SK-N-SH (cell line): ENCODE measurements at regions of chr1 and their contacts with region 1.

Region 1: DNA sequence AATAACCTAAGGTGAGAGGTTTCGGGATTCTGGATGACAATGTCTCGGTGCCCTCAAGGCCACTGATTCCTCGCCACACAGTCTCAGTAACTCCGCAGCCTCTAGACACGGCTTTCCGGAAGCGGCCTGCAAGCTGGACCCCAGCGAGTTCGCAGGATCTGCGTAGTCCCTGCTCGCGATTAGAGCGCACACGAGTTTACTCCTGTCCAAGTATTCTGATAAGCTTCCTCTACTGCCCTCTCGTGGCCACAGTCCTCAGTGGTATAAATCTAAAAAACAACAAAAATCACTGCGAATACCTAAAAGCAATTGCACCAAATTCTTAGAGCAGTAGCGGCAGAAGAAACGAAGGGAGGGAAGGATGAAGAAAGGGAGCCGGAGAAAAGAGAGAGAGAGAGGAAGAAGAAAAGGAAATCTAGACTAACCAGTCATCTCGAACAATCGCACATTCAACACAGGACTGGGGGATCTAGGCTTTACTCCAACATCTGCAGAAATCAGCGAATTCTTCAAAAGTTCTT is 1.1 kb upstream of the PLXNA2 start:
- DNase-seq: peak; percentile 85
- H3K4me3 ChIP-seq: peak overlapping the region; percentile 93 to 96
- H3K27ac ChIP-seq: peak overlapping the region; percentile 57 to 86
- H3K4me1 ChIP-seq: peaks cover under 1 to 42% of the 10 kb centered on the region in 2 experiments; a peak in 3 of 4 replicates
- H3K27me3 ChIP-seq: no peaks in the 10 kb centered on the region
- CTCF ChIP-seq: peak; percentile 83
- EP300 ChIP-seq: peak in 1 of 2 experiments; percentile 46; a peak in 2 of 4 replicates
- RAD21 ChIP-seq: peak; percentile 88

Region 2: GRCh38 chr1:207823880-207824566 is 421.2 kb before region 1 on chr1:
- CTCF ChIA-PET with region 1: no interaction called
- POLR2A ChIA-PET with region 1: no interaction called
- DNase-seq: peak; percentile 67
- H3K4me3 ChIP-seq: no peak overlapping the region
- H3K27ac ChIP-seq: no peak overlapping the region
- H3K4me1 ChIP-seq: peaks cover 0 to 5% of the 10 kb centered on the region in 2 experiments; a peak in 2 of 4 replicates
- H3K27me3 ChIP-seq: no peaks in the 10 kb centered on the region
- CTCF ChIP-seq: peak; percentile 57
- EP300 ChIP-seq: no peak
- RAD21 ChIP-seq: no peak

Region 3: GRCh38 chr1:208029381-208030287 is 215.6 kb before region 1 on chr1:
- CTCF ChIA-PET with region 1: interaction called, 579 read pairs
- POLR2A ChIA-PET with region 1: no interaction called
- DNase-seq: no peak
- H3K4me3 ChIP-seq: no peak overlapping the region
- H3K27ac ChIP-seq: peak overlapping the region in 1 of 2 experiments; percentile 90; a peak in 2 of 4 replicates
- H3K4me1 ChIP-seq: peaks cover 6 to 19% of the 10 kb centered on the region in 2 experiments; a peak in 3 of 4 replicates
- H3K27me3 ChIP-seq: no peaks in the 10 kb centered on the region
- CTCF ChIP-seq: no peak
- EP300 ChIP-seq: no peak; a peak in 1 of 4 replicates
- RAD21 ChIP-seq: no peak

Region 4: DNA sequence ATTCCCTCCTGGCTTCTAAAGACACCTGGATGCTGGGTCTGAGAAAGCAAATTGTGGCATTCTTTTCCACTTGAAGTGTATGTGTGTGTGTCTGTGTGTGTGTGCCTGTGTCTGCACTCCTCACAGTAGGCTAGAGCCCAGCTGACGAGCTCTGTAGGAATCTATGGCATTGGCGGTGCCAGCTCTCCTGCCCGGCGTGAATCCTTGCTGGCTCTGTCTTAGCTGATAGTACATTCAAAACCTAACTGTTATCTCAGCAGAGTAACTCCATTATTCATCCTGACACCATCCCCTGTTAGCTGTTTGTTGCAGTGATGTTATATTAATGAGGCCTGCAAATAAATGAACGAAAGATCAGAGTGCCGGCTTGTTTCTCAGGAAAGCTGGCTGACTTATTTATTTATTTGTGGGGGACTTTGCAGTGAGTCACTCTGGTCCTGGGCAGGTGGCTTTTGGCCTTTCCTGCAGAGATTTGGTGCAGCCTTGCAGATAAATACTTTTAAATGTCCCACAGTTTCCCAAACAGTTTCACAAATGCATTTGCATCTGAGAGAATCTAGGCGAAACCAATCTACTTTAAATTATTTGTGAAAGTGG is 173.7 kb before region 1 on chr1:
- CTCF ChIA-PET with region 1: interaction called, 15 read pairs
- POLR2A ChIA-PET with region 1: no interaction called
- DNase-seq: no peak
- H3K4me3 ChIP-seq: no peak overlapping the region
- H3K27ac ChIP-seq: no peak overlapping the region
- H3K4me1 ChIP-seq: peaks cover 0 to 15% of the 10 kb centered on the region in 2 experiments; a peak in 2 of 4 replicates
- H3K27me3 ChIP-seq: no peaks in the 10 kb centered on the region
- CTCF ChIP-seq: no peak
- EP300 ChIP-seq: no peak
- RAD21 ChIP-seq: no peak

Region 5: DNA sequence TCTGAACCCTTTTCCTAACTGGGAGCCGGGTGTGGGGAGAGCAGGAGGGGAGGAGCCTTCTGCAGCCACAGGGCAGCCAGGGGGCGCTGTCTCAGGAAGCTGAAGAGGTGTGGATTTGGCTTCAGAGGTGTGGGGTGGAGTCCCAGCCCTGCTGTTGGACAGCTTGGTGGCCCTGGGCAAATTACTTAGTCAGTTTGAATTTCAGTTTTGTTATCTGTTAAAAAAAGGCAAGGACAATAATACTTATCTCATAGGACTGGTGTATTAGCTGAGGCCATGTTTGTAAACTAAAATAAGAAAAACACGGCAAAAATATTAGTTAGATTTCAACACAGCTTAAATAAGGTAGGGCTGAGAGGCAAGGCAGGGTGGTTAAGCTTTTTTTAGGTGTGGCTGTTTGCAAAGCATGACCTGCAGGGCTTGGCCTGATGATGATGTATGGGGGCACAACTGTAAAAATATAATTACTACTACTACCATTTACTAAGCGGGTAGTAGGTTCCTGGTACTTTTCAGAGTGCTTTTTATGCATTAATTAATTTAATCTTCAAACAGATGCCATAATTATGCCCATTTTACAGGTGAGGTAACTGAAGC is 112.9 kb before region 1 on chr1:
- CTCF ChIA-PET with region 1: interaction called, 95 read pairs
- POLR2A ChIA-PET with region 1: no interaction called
- DNase-seq: peak; percentile 72
- H3K4me3 ChIP-seq: no peak overlapping the region; a peak in 1 of 4 replicates
- H3K27ac ChIP-seq: no peak overlapping the region
- H3K4me1 ChIP-seq: peaks cover 9 to 46% of the 10 kb centered on the region in 2 experiments; a peak in 2 of 4 replicates
- H3K27me3 ChIP-seq: no peaks in the 10 kb centered on the region
- CTCF ChIP-seq: peak; percentile 94
- EP300 ChIP-seq: no peak
- RAD21 ChIP-seq: peak; percentile 61

Region 6: DNA sequence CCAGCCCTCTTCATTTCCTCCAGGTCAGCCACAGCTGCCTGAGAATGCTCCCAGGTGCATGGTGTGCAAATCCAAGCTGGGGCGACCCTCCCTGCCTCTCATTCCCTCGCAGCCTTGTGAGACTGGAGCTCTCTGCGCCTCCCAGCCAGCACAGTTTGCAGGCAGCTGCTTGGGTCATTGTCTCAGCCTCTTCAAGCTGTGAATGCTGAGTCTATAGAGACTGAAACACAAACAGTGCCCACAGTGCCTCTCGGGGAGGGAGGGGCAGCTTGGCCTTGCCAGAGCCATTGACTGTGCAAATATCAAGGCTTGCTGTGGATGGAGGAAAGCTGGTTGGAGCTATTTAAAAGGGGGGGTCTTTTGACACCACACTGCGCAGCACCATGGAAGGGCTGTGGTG is 11.7 kb before region 1 on chr1:
- CTCF ChIA-PET with region 1: interaction called, 17 read pairs
- POLR2A ChIA-PET with region 1: interaction called, 3 read pairs
- DNase-seq: no peak
- H3K4me3 ChIP-seq: no peak overlapping the region
- H3K27ac ChIP-seq: peak overlapping the region in 1 of 2 experiments; percentile 67; a peak in 1 of 4 replicates
- H3K4me1 ChIP-seq: peaks cover 30 to 45% of the 10 kb centered on the region in 2 experiments
- H3K27me3 ChIP-seq: no peaks in the 10 kb centered on the region
- CTCF ChIP-seq: no peak
- EP300 ChIP-seq: no peak
- RAD21 ChIP-seq: no peak

Region 7: GRCh38 chr1:208461680-208462079 is 216.4 kb after region 1 on chr1:
- CTCF ChIA-PET with region 1: no interaction called
- POLR2A ChIA-PET with region 1: no interaction called
- DNase-seq: no peak
- H3K4me3 ChIP-seq: no peak overlapping the region
- H3K27ac ChIP-seq: no peak overlapping the region
- H3K4me1 ChIP-seq: no peaks in the 10 kb centered on the region
- H3K27me3 ChIP-seq: no peaks in the 10 kb centered on the region
- CTCF ChIP-seq: peak; percentile 46
- EP300 ChIP-seq: no peak
- RAD21 ChIP-seq: 0 out of 2 replicates have a peak, but pooled peaks have one; percentile 12

Region 8: GRCh38 chr1:208557046-208557722 is 311.9 kb after region 1 on chr1:
- CTCF ChIA-PET with region 1: no interaction called
- POLR2A ChIA-PET with region 1: no interaction called
- DNase-seq: peak; percentile 29
- H3K4me3 ChIP-seq: no peak overlapping the region
- H3K27ac ChIP-seq: peak overlapping the region; percentile 37 to 96; a peak in 3 of 4 replicates
- H3K4me1 ChIP-seq: peaks cover 0 to 31% of the 10 kb centered on the region in 2 experiments; a peak in 2 of 4 replicates
- H3K27me3 ChIP-seq: no peaks in the 10 kb centered on the region
- CTCF ChIP-seq: no peak
- EP300 ChIP-seq: no peak
- RAD21 ChIP-seq: peak; percentile 15; the same call in 1 of the 2 replicates